GM18951 (cell line): ENCODE measurements at regions of chr17 and their contacts with region 1.

Region 1: DNA sequence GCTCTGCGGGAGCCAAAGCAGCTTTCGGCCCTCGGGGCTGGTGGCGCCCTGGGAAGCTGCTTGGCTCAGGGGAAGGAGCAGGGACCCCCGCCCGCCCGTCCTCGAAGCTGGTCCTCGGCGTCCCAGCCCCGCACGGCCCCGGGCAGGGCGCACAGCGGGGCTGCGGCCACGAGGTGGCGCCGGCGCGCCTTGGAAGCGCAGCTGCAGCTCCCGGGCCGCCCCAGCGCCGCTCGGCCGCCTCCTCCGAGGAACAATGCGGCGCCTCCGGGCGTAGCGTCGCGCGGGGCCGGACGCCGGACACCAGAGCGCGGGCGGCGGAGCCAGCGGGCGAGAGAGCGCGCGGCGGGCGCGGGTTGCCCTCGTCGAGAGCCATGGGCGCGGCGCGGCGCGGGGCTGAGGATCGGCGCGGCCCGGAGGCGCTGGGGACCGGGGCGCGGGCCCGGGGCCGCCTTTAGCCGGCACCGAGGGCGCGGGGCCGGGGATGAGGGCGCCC is at the start of gene MGAT5B:
- POLR2A ChIP-seq: no peak

Region 2: DNA sequence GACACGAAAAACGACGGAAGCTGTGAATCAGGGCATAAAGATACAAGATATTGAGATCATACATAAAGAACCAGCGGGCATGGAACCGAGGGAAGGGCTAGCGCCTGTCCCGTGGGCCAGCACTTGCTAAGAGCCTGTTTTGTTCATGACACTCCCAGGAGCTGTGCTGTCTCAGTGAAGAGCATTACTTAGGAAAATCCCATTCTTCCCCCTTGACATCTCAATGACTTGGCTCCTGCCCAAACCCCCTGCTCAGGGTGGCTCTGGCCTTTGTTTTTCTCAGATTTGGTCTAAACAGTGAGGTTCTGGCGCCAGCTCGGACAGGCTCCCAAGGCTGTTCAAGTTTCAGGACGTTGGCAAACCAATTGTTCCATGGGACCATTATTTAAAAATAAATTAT is 193.4 kb after region 1 on chr17:
- in situ Hi-C with region 1: loop called (anchors 10 kb)
- POLR2A ChIP-seq: no peak

Region 3: DNA sequence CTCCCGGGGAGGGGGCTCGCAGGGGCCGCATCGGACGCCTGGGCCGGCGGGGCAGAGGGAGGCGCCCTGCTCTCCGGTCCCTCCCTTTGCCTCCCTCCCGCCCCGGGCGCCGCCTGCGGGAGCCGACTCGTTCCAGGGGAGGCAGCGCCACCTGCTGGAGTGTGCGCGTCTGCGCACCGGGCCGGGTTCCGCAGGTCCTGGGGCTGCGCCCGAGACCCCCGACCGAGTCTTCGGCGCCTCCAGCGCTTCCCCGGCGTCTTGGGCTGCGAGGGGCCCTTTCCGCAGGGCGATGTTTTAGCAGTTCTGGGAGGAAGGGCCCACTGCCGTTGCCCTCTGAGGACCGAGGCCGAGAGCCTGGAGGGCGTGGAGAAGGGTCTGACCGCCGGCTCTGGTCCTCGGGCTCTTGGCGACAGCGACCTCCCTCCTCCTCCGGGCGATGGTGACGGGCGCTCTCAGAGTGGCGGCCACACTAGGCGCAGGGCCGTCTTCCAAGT is 378.9 kb after region 1 on chr17:
- in situ Hi-C with region 1: loop called (anchors 25 kb)
- POLR2A ChIP-seq: no peak